ENCODE measurements at regions of chr12 and their contacts with region 1.

Region 1: GRCh38 chr12:57846577-57847319 is at the start of gene CTDSP2:
- DNase-seq: peak; percentile 93
- H3K4me3 Mint-ChIP-seq: peak within 1 kb of the TSS; percentile 88
- H3K27ac Mint-ChIP-seq: peak within 1 kb of the TSS; percentile 92
- H3K4me1 Mint-ChIP-seq: peaks cover 44% of the 10 kb centered on the region
- H3K27me3 Mint-ChIP-seq: peaks cover 7% of the 10 kb centered on the region
- total RNA-seq, gene CTDSP2: 94.6 to 99.8 TPM

Region 2: GRCh38 chr12:57229634-57230380 is 616.9 kb before region 1 on chr12 and contains the start of gene SHMT2:
- CTCF ChIA-PET with region 1: no interaction called
- intact Hi-C with region 1: loop called (anchors 10 kb)
- DNase-seq: peak; percentile 97
- H3K4me3 Mint-ChIP-seq: peak within 1 kb of the TSS; percentile 95
- H3K27ac Mint-ChIP-seq: peak within 1 kb of the TSS; percentile 94
- H3K4me1 Mint-ChIP-seq: peaks cover 61% of the 10 kb centered on the region
- H3K27me3 Mint-ChIP-seq: peaks cover 21% of the 10 kb centered on the region
- total RNA-seq, gene SHMT2: 542 to 552 TPM

Region 3: GRCh38 chr12:57771708-57772428 is 74.9 kb before region 1 on chr12 and contains the start of gene METTL1:
- CTCF ChIA-PET with region 1: no interaction called
- intact Hi-C with region 1: loop called (anchors 1 kb)
- DNase-seq: peak; percentile 97
- H3K4me3 Mint-ChIP-seq: peak within 1 kb of the TSS; percentile 98
- H3K27ac Mint-ChIP-seq: peak within 1 kb of the TSS; percentile 95
- H3K4me1 Mint-ChIP-seq: peaks cover 26% of the 10 kb centered on the region
- H3K27me3 Mint-ChIP-seq: peaks cover 2% of the 10 kb centered on the region
- total RNA-seq, gene METTL1: 17.3 to 20.4 TPM

Region 4: GRCh38 chr12:57803319-57803893 is 43.3 kb before region 1 on chr12:
- CTCF ChIA-PET with region 1: interaction called, 7 read pairs
- intact Hi-C with region 1: loop called (anchors 1 kb)
- DNase-seq: peak; percentile 51
- H3K4me3 Mint-ChIP-seq: no peak overlapping the region
- H3K27ac Mint-ChIP-seq: no peak overlapping the region
- H3K4me1 Mint-ChIP-seq: no peaks in the 10 kb centered on the region
- H3K27me3 Mint-ChIP-seq: no peaks in the 10 kb centered on the region

Region 5: GRCh38 chr12:57836442-57837375 is 10.0 kb before region 1 on chr12:
- CTCF ChIA-PET with region 1: interaction called, 44 read pairs
- intact Hi-C with region 1: loop called (anchors 1 kb)
- DNase-seq: peak; percentile 81
- H3K4me3 Mint-ChIP-seq: peak overlapping the region; percentile 40
- H3K27ac Mint-ChIP-seq: peak overlapping the region; percentile 89
- H3K4me1 Mint-ChIP-seq: peaks cover 97% of the 10 kb centered on the region
- H3K27me3 Mint-ChIP-seq: no peaks in the 10 kb centered on the region

Region 6: GRCh38 chr12:57865090-57865751 is 18.5 kb after region 1 on chr12:
- CTCF ChIA-PET with region 1: interaction called, 4 read pairs
- intact Hi-C with region 1: loop called (anchors 1 kb)
- DNase-seq: peak; percentile 82
- H3K4me3 Mint-ChIP-seq: peak overlapping the region; percentile 71
- H3K27ac Mint-ChIP-seq: peak overlapping the region; percentile 33
- H3K4me1 Mint-ChIP-seq: peaks cover 6% of the 10 kb centered on the region
- H3K27me3 Mint-ChIP-seq: no peaks in the 10 kb centered on the region

Region 7: DNA sequence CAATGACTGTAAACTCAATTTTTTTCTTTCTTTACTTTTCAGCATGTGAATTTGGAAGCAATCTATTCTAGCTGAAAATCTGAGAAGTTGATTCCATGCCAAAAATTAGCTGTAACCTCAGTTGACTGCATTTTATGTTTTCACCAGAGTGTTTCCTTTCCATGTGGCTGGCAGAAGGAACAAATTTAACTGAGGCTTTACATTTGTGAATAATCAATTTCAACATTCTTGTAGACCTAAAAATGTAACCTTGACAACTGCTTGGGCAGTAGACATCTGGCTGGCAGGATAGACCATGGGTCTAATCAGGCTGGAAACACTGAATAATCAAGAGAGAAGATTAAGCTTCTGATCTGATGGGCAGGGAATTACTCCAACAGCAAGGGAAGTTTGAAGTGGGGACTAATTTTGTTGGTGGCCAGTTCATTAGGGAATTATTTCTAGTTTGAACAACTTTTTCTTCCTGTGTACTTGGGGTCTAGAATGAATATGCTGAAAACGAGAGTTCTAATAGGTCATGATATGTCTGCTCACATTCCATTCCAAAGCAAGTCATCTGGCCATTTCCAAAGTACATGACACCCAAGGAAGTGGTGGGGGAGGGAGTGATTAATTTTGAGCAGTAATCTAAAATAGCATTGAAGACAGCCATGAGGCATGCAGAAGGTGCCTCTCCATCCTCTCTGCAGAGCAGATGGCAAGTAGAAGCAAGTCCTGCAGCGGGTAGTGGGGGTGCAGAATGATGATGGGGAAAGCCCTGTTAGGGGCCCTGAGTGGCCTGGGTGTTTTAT is 162.9 kb after region 1 on chr12:
- CTCF ChIA-PET with region 1: no interaction called
- intact Hi-C with region 1: no loop called
- DNase-seq: no peak
- H3K4me3 Mint-ChIP-seq: no peak overlapping the region
- H3K27ac Mint-ChIP-seq: no peak overlapping the region
- H3K4me1 Mint-ChIP-seq: no peaks in the 10 kb centered on the region
- H3K27me3 Mint-ChIP-seq: peaks cover 7% of the 10 kb centered on the region

Measured in activated naive CD4-positive, alpha-beta T cell treated with anti-CD3 and anti-CD28 coated beads for 36 hours (primary cell).